BJ (cell line): ENCODE measurements at regions of chr2 and their contacts with region 1.

Region 1: GRCh38 chr2:74391580-74392448 is 11.7 kb upstream of the DCTN1 start:
- DNase-seq: no peak
- H3K4me3 ChIP-seq: peak overlapping the region; percentile 81
- H3K27me3 ChIP-seq: no peaks in the 10 kb centered on the region
- CTCF ChIP-seq: peak; percentile 97

Region 2: GRCh38 chr2:74347742-74348141 is 44.1 kb before region 1 on chr2:
- CTCF ChIA-PET with region 1: no interaction called
- POLR2A ChIA-PET with region 1: no interaction called
- DNase-seq: no peak
- H3K4me3 ChIP-seq: no peak overlapping the region
- H3K27me3 ChIP-seq: no peaks in the 10 kb centered on the region
- CTCF ChIP-seq: no peak

Region 3: GRCh38 chr2:74379851-74380789 is 11.7 kb before region 1 on chr2 and contains the start of gene DCTN1:
- CTCF ChIA-PET with region 1: interaction called, 17 read pairs
- POLR2A ChIA-PET with region 1: interaction called, 3 read pairs
- DNase-seq: no peak
- H3K4me3 ChIP-seq: peak within 1 kb of the TSS; percentile 55
- H3K27me3 ChIP-seq: no peaks in the 10 kb centered on the region
- CTCF ChIP-seq: no peak
- polyA plus RNA-seq, gene DCTN1: 136 and 193 TPM in 2 replicates

Region 4: GRCh38 chr2:74414881-74415761 is 23.3 kb after region 1 on chr2:
- CTCF ChIA-PET with region 1: interaction called, 11 read pairs
- POLR2A ChIA-PET with region 1: no interaction called
- DNase-seq: no peak
- H3K4me3 ChIP-seq: peak overlapping the region; percentile 34
- H3K27me3 ChIP-seq: no peaks in the 10 kb centered on the region
- CTCF ChIP-seq: peak; percentile 38

Region 5: GRCh38 chr2:74482801-74483674 is 91.2 kb after region 1 on chr2 and contains the starts of genes CCDC142 and TTC31:
- CTCF ChIA-PET with region 1: no interaction called
- POLR2A ChIA-PET with region 1: no interaction called
- DNase-seq: peak; percentile 74
- H3K4me3 ChIP-seq: peak within 1 kb of the TSS; percentile 91
- H3K27me3 ChIP-seq: no peaks in the 10 kb centered on the region
- CTCF ChIP-seq: peak; percentile 92
- polyA plus RNA-seq, gene CCDC142: 4.5 and 6.2 TPM in 2 replicates
- polyA plus RNA-seq, gene TTC31: 19.4 and 26.0 TPM in 2 replicates